Mammary epithelial cell (primary cell): ENCODE measurements at regions of chr19 and their contacts with region 1.

Region 1: GRCh38 chr19:42176990-42177685 is 40.3 kb downstream of the DEDD2 start:
- DNase-seq: peak; percentile 76
- H3K4me3 ChIP-seq: peak overlapping the region in 2 of 3 experiments; percentile 13 to 50
- H3K27ac ChIP-seq: no peak overlapping the region
- H3K4me1 ChIP-seq: peaks cover 11% of the 10 kb centered on the region
- H3K27me3 ChIP-seq: peaks cover 20% of the 10 kb centered on the region
- CTCF ChIP-seq: peak; percentile 16 to 45

Region 2: DNA sequence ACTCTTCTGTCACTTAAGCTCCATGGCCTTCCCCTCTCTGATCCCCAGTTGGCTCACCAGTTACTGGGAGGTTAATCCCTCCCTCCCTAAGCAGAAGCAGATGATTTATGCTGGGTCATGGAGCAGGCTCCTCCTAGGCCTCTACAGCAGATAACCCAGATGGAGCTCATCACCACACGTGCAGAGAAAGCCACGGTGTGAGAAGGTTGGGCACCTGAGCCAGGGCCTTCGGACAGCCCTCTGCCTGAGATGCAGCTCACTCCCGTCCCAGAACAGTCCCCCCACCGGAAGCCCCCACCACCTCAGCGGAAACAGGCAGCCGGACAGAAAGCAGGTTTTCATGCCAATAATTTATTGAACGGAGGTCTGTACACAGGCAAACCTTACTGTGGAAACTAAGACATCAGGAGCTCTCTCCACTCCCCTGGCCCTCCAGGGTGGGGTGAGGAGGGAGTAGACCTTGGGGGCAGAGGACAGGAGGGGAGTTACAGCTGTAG is 52.8 kb after region 1 on chr19:
- CTCF ChIA-PET with region 1: interaction called, 13 read pairs
- dilution Hi-C with region 1: no loop called
- in situ Hi-C with region 1: no loop called
- intact Hi-C with region 1: no loop called
- DNase-seq: no peak
- H3K4me3 ChIP-seq: no peak overlapping the region
- H3K27ac ChIP-seq: no peak overlapping the region
- H3K4me1 ChIP-seq: peaks cover 16% of the 10 kb centered on the region
- H3K27me3 ChIP-seq: no peaks in the 10 kb centered on the region
- CTCF ChIP-seq: no peak

Region 3: GRCh38 chr19:42325273-42325895 is 148.2 kb after region 1 on chr19 and contains the start of gene MEGF8:
- CTCF ChIA-PET with region 1: no interaction called
- dilution Hi-C with region 1: no loop called
- in situ Hi-C with region 1: no loop called
- intact Hi-C with region 1: no loop called
- DNase-seq: peak; percentile 98
- H3K4me3 ChIP-seq: peak within 1 kb of the TSS; percentile 68 to 95 (median 69)
- H3K27ac ChIP-seq: peak within 1 kb of the TSS; percentile 42
- H3K4me1 ChIP-seq: peaks cover 13% of the 10 kb centered on the region
- H3K27me3 ChIP-seq: no peaks in the 10 kb centered on the region
- CTCF ChIP-seq: peak; percentile 93 to 96
- total RNA-seq, gene MEGF8: 16.6 to 29.3 TPM